Thyroid gland (tissue), 4 donors: ENCODE measurements at regions of chr7 and their contacts with region 1.

Region 1: GRCh38 chr7:99408379-99409191 is at the starts of genes BUD31 and PDAP1:
- DNase-seq: peak; percentile 93 to 94
- H3K4me3 ChIP-seq: peak within 1 kb of the TSS; percentile 93 to 100 (median 96)
- H3K27ac ChIP-seq: peak within 1 kb of the TSS; percentile 96 to 99 (median 99)
- H3K4me1 ChIP-seq: peaks cover 23 to 29% of the 10 kb centered on the region in 2 donors
- H3K27me3 ChIP-seq: no peaks in the 10 kb centered on the region
- CTCF ChIP-seq: peak in 3 of 6 experiments; percentile 24 to 35 (median 29)
- POLR2A ChIP-seq: peak in 1 of 2 donors; percentile 88
- total RNA-seq, gene BUD31: 41.9 to 89.1 (median 65.4) TPM
- total RNA-seq, gene PDAP1: 73.9 to 112 (median 93.2) TPM

Region 2: DNA sequence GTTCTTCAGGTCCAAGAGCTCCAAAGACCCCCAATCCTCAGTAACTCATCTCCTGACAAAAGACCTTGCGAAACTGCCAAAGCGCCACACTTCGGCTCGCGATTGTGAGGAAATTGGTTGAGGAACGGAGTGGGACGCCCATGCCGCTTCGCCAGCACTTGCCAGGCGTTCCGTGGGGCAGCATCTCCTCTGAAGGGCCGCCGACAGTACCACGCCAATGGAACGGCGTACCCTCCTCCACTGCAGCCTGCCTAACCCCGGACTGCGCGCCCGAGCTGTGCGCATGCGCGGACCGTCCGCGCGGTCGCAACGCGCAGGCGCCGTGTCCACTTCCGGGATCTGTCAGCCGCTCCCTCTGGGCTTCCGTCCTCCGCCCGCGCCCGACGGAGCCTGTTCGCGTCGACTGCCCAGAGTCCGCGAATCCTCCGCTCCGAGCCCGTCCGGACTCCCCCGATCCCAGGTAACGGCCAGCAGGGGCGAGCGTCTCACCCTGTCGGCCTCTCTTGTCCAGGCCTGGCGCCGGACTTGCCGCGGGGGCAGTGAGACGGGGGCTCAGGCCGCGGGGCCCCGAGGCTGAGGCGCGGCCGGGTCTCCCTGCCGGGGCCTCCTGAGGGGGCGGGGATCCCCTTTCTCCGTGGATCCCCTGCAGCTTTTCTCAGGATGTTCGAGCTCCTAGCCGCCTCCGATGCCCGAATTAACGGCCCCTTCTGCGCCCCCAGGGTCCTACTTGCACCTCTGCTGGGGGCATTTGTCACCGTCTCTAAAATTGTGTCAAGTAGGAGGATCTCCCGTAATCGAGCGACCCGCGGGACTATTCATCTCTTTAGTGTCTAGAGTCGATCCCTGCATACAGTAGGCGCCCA is 82.8 kb before region 1 on chr7 and contains the start of gene ARPC1A:
- intact Hi-C with region 1: loop called (anchors 10 kb)
- DNase-seq: peak; percentile 90 to 93
- H3K4me3 ChIP-seq: peak within 1 kb of the TSS; percentile 77 to 97 (median 85)
- H3K27ac ChIP-seq: peak within 1 kb of the TSS; percentile 68 to 85 (median 82)
- H3K4me1 ChIP-seq: peaks cover 19 to 29% of the 10 kb centered on the region in 2 donors
- H3K27me3 ChIP-seq: no peaks in the 10 kb centered on the region
- CTCF ChIP-seq: peak in 3 of 6 experiments; percentile 23 to 40 (median 29)
- POLR2A ChIP-seq: peak in 1 of 2 donors; percentile 80
- total RNA-seq, gene ARPC1A: 120 to 183 (median 147) TPM

Region 3: GRCh38 chr7:99374103-99375064 is 34.2 kb before region 1 on chr7 and contains the start of gene ARPC1B:
- intact Hi-C with region 1: loop called (anchors 5 kb)
- DNase-seq: peak; percentile 89 to 93
- H3K4me3 ChIP-seq: peak within 1 kb of the TSS; percentile 47 to 93 (median 51)
- H3K27ac ChIP-seq: peak within 1 kb of the TSS; percentile 83 to 96 (median 94)
- H3K4me1 ChIP-seq: peaks cover 24 to 35% of the 10 kb centered on the region in 2 donors
- H3K27me3 ChIP-seq: no peaks in the 10 kb centered on the region
- CTCF ChIP-seq: no peak
- POLR2A ChIP-seq: peak in 1 of 2 donors; percentile 70
- total RNA-seq, gene ARPC1B: 214 to 273 (median 228) TPM